HAP-1 (cell line): ENCODE measurements at regions of chr18 and their contacts with region 1.

Region 1: GRCh38 chr18:50786864-50787263 is 33.0 kb downstream of the MRO start:
- DNase-seq: no peak
- H3K4me3 ChIP-seq: no peak overlapping the region
- H3K4me1 ChIP-seq: no peaks in the 10 kb centered on the region
- H3K27me3 ChIP-seq: no peaks in the 10 kb centered on the region

Region 2: GRCh38 chr18:50507120-50507590 is 279.7 kb before region 1 on chr18:
- in situ Hi-C with region 1: loop called (anchors 10 kb)
- DNase-seq: peak in 1 of 2 experiments; percentile 66
- H3K4me3 ChIP-seq: no peak overlapping the region
- H3K4me1 ChIP-seq: 0 out of 2 replicates have a peak, but pooled peaks cover 2% of the 10 kb centered on the region
- H3K27me3 ChIP-seq: no peaks in the 10 kb centered on the region